Colonic mucosa (tissue), 4 donors: ENCODE measurements at regions of chr15 and their contacts with region 1.

Region 1: GRCh38 chr15:39686000-39686613 is 96.5 kb downstream of the FSIP1 start:
- DNase-seq: peak; percentile 54
- H3K4me3 ChIP-seq: no peak overlapping the region
- H3K27ac ChIP-seq: no peak overlapping the region
- H3K4me1 ChIP-seq: no peaks in the 10 kb centered on the region
- H3K27me3 ChIP-seq: no peaks in the 10 kb centered on the region
- CTCF ChIP-seq: peak; percentile 77

Region 2: DNA sequence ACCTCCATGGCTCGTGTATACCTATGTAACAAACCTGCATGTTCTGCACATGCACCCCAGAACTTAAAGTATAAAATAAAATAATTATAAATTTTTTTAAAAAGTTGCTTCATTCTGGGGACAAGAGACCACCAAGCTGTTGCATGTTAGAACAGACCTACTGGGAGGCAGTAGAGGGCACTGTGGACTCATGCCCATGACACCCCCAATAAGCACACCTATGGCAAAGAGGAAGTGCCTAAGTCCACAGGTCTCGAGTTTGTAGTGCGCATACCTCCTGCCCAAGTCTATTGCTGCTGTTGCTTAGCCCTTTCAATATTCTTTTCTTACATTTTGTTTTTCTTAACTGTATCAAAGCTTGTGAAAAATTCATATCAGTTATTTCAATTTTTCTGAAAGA is 373.1 kb before region 1 on chr15:
- intact Hi-C with region 1: loop called (anchors 10 kb)
- DNase-seq: peak; percentile 78
- H3K4me3 ChIP-seq: no peak overlapping the region
- H3K27ac ChIP-seq: peak overlapping the region; percentile 60
- H3K4me1 ChIP-seq: peaks cover 6% of the 10 kb centered on the region
- H3K27me3 ChIP-seq: no peaks in the 10 kb centered on the region
- CTCF ChIP-seq: peak; percentile 61

Region 3: DNA sequence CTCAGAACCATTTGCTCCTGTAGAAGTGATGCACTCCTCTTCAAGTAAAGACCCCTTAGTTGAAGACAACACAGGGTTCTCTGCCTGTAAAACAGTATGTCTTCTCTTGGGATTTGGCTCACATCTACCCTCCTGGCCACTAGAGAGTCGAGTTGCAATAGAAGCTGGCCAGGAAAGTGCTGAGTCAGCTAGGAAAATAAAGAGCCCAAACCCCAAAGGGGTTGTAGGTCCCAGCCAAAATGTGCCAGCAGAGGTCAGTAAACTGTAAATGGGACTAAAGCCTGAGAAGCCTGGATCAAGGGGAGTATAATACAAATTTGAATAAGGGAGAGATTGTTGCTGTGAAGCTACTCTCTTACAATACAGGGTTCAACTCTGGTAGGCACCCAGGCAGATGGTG is 142.5 kb before region 1 on chr15:
- intact Hi-C with region 1: no loop called
- DNase-seq: no peak
- H3K4me3 ChIP-seq: no peak overlapping the region
- H3K27ac ChIP-seq: no peak overlapping the region
- H3K4me1 ChIP-seq: no peaks in the 10 kb centered on the region
- H3K27me3 ChIP-seq: no peaks in the 10 kb centered on the region
- CTCF ChIP-seq: no peak

Region 4: GRCh38 chr15:39586387-39587171 is 99.5 kb before region 1 on chr15:
- intact Hi-C with region 1: loop called (anchors 5 kb)
- DNase-seq: no peak
- H3K4me3 ChIP-seq: no peak overlapping the region
- H3K27ac ChIP-seq: no peak overlapping the region
- H3K4me1 ChIP-seq: no peaks in the 10 kb centered on the region
- H3K27me3 ChIP-seq: no peaks in the 10 kb centered on the region
- CTCF ChIP-seq: no peak

Region 5: DNA sequence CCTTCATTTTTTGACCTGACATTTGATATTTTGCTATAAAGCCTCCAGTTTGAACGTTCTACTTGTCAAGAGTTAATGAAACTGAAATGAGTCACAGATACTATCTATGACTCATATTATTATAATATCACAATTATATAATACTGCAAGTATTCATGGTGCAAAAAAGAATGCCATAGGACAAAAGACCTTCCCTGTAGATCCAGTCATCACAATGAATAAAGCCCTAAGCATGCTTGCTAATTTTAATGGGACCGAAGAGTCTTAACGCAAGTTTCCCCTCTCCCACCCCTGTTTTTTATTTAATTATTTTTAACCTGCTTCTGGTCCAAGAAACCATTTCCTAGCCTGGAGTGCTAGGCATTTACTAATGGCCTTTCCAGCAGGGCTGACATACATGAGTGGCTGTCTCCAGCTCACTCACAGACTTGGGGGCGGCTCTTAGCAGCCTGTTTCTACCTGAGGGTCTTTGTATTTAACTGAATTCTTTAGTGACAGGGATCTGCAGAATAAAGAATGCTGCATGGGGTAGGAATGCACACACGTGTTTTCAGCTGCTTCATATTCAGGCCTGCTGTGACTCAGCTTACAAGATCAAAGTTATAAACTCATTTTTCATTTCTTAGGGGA is 44.0 kb before region 1 on chr15:
- intact Hi-C with region 1: no loop called
- DNase-seq: no peak
- H3K4me3 ChIP-seq: no peak overlapping the region
- H3K27ac ChIP-seq: peak overlapping the region; percentile 48
- H3K4me1 ChIP-seq: no peaks in the 10 kb centered on the region
- H3K27me3 ChIP-seq: no peaks in the 10 kb centered on the region
- CTCF ChIP-seq: no peak